Caco-2 (cell line): ENCODE measurements at regions of chr7 and their contacts with region 1.

Region 1: DNA sequence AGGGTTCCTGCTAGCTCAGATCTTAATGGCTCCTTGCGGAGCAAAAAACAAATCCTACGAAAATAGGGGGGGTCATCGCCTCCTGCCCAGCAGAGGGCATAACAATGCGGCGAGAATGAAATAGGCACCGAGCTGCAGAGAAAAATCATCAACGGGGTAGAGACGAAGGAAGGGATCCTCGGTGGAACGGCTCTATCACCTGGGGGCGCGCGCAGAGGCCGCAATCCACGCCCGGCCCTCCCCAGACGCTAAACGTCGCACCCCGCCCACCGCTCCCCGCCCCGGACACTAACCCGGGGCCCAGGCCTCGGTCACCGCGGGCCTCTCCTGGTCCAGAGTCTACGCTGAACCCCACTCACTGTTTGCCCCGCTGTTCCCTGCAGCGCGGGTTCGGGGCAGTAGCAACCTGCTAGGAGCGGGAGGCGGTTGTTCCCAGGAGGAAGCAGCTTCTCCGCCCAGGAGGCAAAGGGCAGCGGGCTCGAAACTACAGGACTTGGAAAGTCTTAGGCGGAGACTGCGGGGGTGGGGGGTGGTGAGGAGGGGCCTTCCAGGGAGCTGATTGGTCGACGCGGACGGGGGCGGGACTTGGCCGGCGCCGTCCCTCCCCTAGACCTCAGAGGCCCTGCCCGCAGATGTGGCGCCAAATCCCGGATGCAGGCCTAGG is at the start of gene TCAF1:
- DNase-seq: peak; percentile 96 to 98
- H3K4me3 ChIP-seq: peak within 1 kb of the TSS; percentile 90
- H3K4me3 Mint-ChIP-seq: peak within 1 kb of the TSS; percentile 92
- H3K27ac Mint-ChIP-seq: peak within 1 kb of the TSS; percentile 94
- H3K4me1 ChIP-seq: peaks cover 25% of the 10 kb centered on the region
- H3K4me1 Mint-ChIP-seq: peaks cover 36% of the 10 kb centered on the region
- H3K27me3 ChIP-seq: no peaks in the 10 kb centered on the region
- H3K27me3 Mint-ChIP-seq: no peaks in the 10 kb centered on the region
- CTCF ChIP-seq: peak; percentile 14 to 63
- total RNA-seq, gene TCAF1: 92.3 and 95.1 TPM in 2 replicates

Region 2: GRCh38 chr7:143914938-143915652 is 13.3 kb after region 1 on chr7:
- CTCF ChIA-PET with region 1: interaction called, 4 read pairs
- POLR2A ChIA-PET with region 1: interaction called, 3 read pairs
- intact Hi-C with region 1: loop called (anchors 1 kb)
- DNase-seq: no peak
- H3K4me3 ChIP-seq: no peak overlapping the region
- H3K4me3 Mint-ChIP-seq: no peak overlapping the region
- H3K27ac Mint-ChIP-seq: no peak overlapping the region
- H3K4me1 ChIP-seq: peaks cover 14% of the 10 kb centered on the region; the same call in 1 of the 2 replicates
- H3K4me1 Mint-ChIP-seq: peaks cover 12% of the 10 kb centered on the region
- H3K27me3 ChIP-seq: no peaks in the 10 kb centered on the region
- H3K27me3 Mint-ChIP-seq: no peaks in the 10 kb centered on the region
- CTCF ChIP-seq: no peak

Region 3: GRCh38 chr7:143965280-143965679 is 63.5 kb after region 1 on chr7:
- CTCF ChIA-PET with region 1: interaction called, 6 read pairs
- POLR2A ChIA-PET with region 1: interaction called, 3 read pairs
- intact Hi-C with region 1: loop called (anchors 1 kb)
- DNase-seq: peak; percentile 82 to 90
- H3K4me3 ChIP-seq: no peak overlapping the region
- H3K4me3 Mint-ChIP-seq: peak overlapping the region; percentile 46
- H3K27ac Mint-ChIP-seq: peak overlapping the region; percentile 85
- H3K4me1 ChIP-seq: peaks cover 31% of the 10 kb centered on the region
- H3K4me1 Mint-ChIP-seq: peaks cover 20% of the 10 kb centered on the region
- H3K27me3 ChIP-seq: no peaks in the 10 kb centered on the region
- H3K27me3 Mint-ChIP-seq: no peaks in the 10 kb centered on the region
- CTCF ChIP-seq: no peak

Region 4: GRCh38 chr7:143975617-143976016 is 73.8 kb after region 1 on chr7:
- CTCF ChIA-PET with region 1: interaction called, 7 read pairs
- POLR2A ChIA-PET with region 1: interaction called, 31 read pairs
- intact Hi-C with region 1: loop called (anchors 2 kb)
- DNase-seq: peak in 1 of 2 experiments; percentile 30
- H3K4me3 ChIP-seq: no peak overlapping the region
- H3K4me3 Mint-ChIP-seq: no peak overlapping the region
- H3K27ac Mint-ChIP-seq: no peak overlapping the region
- H3K4me1 ChIP-seq: peaks cover 61% of the 10 kb centered on the region
- H3K4me1 Mint-ChIP-seq: peaks cover 38% of the 10 kb centered on the region
- H3K27me3 ChIP-seq: no peaks in the 10 kb centered on the region
- H3K27me3 Mint-ChIP-seq: no peaks in the 10 kb centered on the region
- CTCF ChIP-seq: peak in 1 of 2 experiments; percentile 7

Region 5: DNA sequence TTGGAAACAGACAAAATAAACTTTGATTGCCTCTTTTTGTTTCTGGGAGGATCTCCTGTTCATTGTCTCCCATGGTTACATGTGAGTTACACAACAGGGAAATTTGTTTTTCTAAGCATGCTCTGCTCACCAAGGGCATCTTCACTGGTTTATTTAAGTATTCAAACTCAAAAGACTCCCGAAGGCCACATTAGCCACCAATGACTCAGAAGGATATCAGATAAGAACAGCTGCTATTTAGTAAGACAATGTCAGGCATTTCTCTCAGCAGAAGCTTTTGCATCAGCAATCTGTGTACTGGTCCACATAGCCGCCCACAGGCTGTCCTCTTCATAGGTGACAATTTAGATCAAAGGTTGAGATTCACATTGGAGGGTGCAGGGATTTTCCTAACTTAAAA is 117.7 kb after region 1 on chr7:
- CTCF ChIA-PET with region 1: interaction called, 9 read pairs
- POLR2A ChIA-PET with region 1: interaction called, 6 read pairs
- intact Hi-C with region 1: loop called (anchors 1 kb)
- DNase-seq: peak; percentile 69 to 77
- H3K4me3 ChIP-seq: no peak overlapping the region
- H3K4me3 Mint-ChIP-seq: no peak overlapping the region
- H3K27ac Mint-ChIP-seq: peak overlapping the region; percentile 69
- H3K4me1 ChIP-seq: peaks cover 35% of the 10 kb centered on the region
- H3K4me1 Mint-ChIP-seq: peaks cover 42% of the 10 kb centered on the region
- H3K27me3 ChIP-seq: no peaks in the 10 kb centered on the region
- H3K27me3 Mint-ChIP-seq: no peaks in the 10 kb centered on the region
- CTCF ChIP-seq: no peak

Region 6: GRCh38 chr7:144027070-144027469 is 125.3 kb after region 1 on chr7:
- CTCF ChIA-PET with region 1: interaction called, 9 read pairs
- POLR2A ChIA-PET with region 1: interaction called, 5 read pairs
- intact Hi-C with region 1: loop called (anchors 1 kb)
- DNase-seq: no peak
- H3K4me3 ChIP-seq: no peak overlapping the region
- H3K4me3 Mint-ChIP-seq: no peak overlapping the region
- H3K27ac Mint-ChIP-seq: no peak overlapping the region
- H3K4me1 ChIP-seq: peaks cover 36% of the 10 kb centered on the region
- H3K4me1 Mint-ChIP-seq: peaks cover 27% of the 10 kb centered on the region
- H3K27me3 ChIP-seq: no peaks in the 10 kb centered on the region
- H3K27me3 Mint-ChIP-seq: no peaks in the 10 kb centered on the region
- CTCF ChIP-seq: peak; percentile 40 to 59

Region 7: DNA sequence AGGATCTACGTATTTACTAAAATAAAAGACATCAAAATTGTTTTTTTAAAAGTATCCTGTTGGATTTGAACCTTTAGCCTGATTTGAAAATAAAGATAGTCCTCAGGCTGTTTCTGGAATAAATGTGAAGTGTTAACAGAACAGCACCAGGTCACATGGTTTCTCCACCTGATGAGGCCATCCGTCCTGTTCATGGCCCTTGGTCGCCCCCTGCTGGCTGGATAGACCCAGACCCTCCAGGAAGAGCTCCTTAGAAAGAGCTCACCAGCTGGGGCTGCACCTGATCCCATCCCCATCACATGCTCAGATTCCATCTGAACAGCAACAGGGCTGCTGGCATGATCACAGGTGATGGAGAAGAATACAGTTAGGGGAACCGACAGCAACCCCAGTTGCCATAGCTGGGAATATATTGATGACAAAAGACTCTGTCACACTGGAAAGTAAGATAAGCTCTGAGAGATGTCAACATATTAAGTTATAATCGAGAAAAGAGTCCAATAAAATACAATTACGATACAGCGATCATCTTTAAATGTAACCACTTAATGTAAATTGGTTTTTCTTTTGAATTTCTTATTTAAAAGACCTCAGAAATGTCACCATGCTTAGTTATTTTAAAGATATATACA is 226.0 kb after region 1 on chr7:
- CTCF ChIA-PET with region 1: interaction called, 20 read pairs
- POLR2A ChIA-PET with region 1: interaction called, 3 read pairs
- intact Hi-C with region 1: loop called (anchors 1 kb)
- DNase-seq: peak; percentile 91 to 95
- H3K4me3 ChIP-seq: no peak overlapping the region
- H3K4me3 Mint-ChIP-seq: no peak overlapping the region
- H3K27ac Mint-ChIP-seq: no peak overlapping the region
- H3K4me1 ChIP-seq: no peaks in the 10 kb centered on the region
- H3K4me1 Mint-ChIP-seq: no peaks in the 10 kb centered on the region
- H3K27me3 ChIP-seq: no peaks in the 10 kb centered on the region
- H3K27me3 Mint-ChIP-seq: no peaks in the 10 kb centered on the region
- CTCF ChIP-seq: peak; percentile 94 to 97